SK-N-SH (cell line): ENCODE measurements at regions of chr15 and their contacts with region 1.

Region 1: DNA sequence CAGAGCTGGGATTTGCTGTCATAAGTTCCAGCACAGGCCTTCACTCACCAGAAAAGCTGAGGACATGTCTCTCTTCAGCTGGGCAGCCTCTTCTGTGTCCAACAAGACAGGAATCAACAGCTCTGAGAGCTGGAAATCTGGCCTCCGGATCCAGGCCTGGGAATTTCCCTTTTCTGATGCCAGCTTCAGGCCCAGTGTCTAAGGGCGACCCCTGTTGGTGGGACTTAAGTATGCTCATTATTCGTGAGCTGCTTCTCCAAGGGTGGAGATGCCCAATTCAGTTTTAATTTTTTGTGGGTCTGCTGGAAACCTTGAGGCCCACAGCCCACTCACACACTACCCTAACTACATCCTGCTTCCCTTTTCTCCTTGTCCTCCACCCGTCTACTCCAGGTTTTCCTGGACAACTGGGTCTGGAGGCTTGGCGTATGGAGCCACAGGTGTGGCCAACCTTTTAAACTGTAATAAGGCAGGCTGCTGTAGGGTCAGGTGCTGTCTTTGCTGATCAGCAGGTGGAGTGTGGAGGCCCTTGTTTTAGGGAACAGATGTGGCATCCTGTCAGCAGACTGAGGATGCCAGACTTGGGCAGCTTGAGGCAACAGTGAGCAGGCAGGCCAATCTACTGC is 2.6 kb upstream of the CEMIP start:
- DNase-seq: peak; percentile 76
- H3K4me3 ChIP-seq: peak overlapping the region in 1 of 2 experiments; percentile 13; a peak in 1 of 4 replicates
- H3K27ac ChIP-seq: peak overlapping the region in 1 of 2 experiments; percentile 72; a peak in 2 of 4 replicates
- H3K4me1 ChIP-seq: peaks cover 0 to 27% of the 10 kb centered on the region in 2 experiments; a peak in 3 of 4 replicates
- H3K27me3 ChIP-seq: no peaks in the 10 kb centered on the region
- CTCF ChIP-seq: peak; percentile 88
- EP300 ChIP-seq: no peak
- RAD21 ChIP-seq: peak; percentile 90

Region 2: DNA sequence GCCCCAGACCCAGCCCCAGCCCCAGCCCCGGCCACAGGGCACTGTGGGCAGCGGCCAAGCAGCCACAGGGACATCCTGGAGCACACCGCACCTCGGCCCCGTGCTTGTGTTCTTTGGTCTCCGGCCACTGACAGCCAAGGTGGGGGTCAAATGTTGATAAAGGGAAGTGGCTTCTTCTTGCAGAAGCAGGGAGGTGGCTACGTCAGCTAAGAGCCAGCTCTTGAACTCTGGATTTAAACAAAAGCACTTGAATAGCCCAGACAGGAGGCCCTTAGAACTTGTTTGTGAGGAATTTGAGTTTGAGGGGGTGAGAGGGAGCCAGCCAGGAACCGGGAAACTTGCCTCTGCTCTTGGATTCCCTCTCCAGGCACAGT is 217.2 kb before region 1 on chr15:
- CTCF ChIA-PET with region 1: interaction called, 16 read pairs
- POLR2A ChIA-PET with region 1: no interaction called
- DNase-seq: no peak
- H3K4me3 ChIP-seq: no peak overlapping the region
- H3K27ac ChIP-seq: no peak overlapping the region
- H3K4me1 ChIP-seq: peaks cover 0 to 7% of the 10 kb centered on the region in 2 experiments; a peak in 1 of 4 replicates
- H3K27me3 ChIP-seq: no peaks in the 10 kb centered on the region
- CTCF ChIP-seq: no peak
- EP300 ChIP-seq: no peak
- RAD21 ChIP-seq: no peak

Region 3: DNA sequence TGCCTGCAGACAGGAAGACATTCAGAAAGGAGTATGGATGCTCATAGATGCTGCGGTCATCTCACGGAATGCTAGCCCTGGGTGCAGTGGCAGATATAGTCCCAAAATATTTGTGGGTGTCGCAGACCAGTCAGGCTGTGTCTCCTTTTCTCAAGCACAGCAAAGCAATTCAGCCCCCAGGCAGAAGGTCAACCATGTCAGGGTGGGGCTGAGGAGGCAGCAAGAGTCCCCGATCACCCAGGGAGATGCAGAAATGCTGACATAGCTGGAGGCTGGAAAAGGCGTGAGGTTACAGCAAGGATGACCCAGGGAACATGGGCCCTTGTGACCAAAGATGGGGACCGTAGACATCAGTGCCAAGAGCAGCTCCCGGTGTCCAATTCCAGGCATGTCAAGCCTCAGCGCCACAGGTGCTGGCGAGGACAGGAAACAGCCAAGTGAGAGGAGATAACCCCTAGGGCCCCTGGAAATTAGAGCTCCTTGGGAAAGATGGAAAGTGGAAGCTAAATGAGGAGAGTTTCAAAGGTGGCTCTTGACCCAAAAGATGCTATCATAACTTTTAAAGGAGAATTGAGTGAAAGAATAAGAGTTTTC is 162.7 kb before region 1 on chr15:
- CTCF ChIA-PET with region 1: interaction called, 31 read pairs
- POLR2A ChIA-PET with region 1: no interaction called
- DNase-seq: no peak
- H3K4me3 ChIP-seq: no peak overlapping the region
- H3K27ac ChIP-seq: no peak overlapping the region
- H3K4me1 ChIP-seq: peaks cover 27 to 30% of the 10 kb centered on the region in 2 experiments
- H3K27me3 ChIP-seq: no peaks in the 10 kb centered on the region
- CTCF ChIP-seq: no peak
- EP300 ChIP-seq: no peak
- RAD21 ChIP-seq: no peak

Region 4: DNA sequence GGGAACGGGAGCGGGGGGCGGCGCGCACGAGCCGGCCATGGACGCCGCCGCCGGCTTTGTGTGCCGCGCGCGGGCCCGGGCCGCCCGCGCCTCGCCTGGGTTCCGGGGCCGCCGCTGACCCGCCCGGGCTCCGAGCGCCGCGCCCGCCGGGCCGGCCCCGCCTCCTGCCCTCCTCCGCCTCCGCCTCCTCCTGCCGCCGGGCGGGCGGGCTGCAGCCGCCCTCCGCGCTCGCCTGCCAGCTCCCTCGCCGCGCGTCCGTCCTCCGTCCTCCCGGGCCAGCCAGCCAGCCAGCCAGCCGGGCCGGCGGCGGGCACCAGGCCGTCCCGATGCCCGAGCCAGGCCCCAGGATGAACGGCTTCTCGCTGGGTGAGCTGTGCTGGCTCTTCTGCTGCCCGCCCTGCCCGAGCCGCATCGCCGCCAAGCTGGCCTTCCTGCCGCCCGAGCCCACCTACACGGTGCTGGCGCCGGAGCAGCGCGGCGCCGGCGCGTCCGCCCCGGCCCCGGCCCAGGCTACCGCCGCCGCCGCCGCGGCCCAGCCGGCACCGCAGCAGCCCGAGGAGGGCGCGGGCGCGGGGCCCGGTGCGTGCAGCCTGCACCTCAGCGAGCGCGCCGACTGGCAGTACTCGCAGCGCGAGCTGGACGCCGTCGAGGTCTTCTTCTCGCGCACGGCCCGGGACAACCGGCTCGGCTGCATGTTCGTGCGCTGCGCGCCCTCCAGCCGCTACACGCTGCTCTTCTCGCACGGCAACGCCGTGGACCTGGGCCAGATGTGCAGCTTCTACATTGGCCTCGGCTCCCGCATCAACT is 81.2 kb before region 1 on chr15 and contains the start of gene ABHD17C:
- CTCF ChIA-PET with region 1: interaction called, 49 read pairs
- POLR2A ChIA-PET with region 1: no interaction called
- DNase-seq: peak; percentile 92
- H3K4me3 ChIP-seq: peak within 1 kb of the TSS; percentile 73 to 76
- H3K27ac ChIP-seq: peak within 1 kb of the TSS; percentile 40 to 78
- H3K4me1 ChIP-seq: peaks cover 0 to 15% of the 10 kb centered on the region in 2 experiments; a peak in 2 of 4 replicates
- H3K27me3 ChIP-seq: no peaks in the 10 kb centered on the region
- CTCF ChIP-seq: no peak
- EP300 ChIP-seq: no peak
- RAD21 ChIP-seq: no peak
- polyA plus RNA-seq, gene ABHD17C: 9.2 and 11.7 TPM in 2 replicates

Region 5: GRCh38 chr15:80804965-80805495 is 28.5 kb after region 1 on chr15:
- CTCF ChIA-PET with region 1: interaction called, 11 read pairs
- POLR2A ChIA-PET with region 1: no interaction called
- DNase-seq: no peak
- H3K4me3 ChIP-seq: no peak overlapping the region
- H3K27ac ChIP-seq: no peak overlapping the region
- H3K4me1 ChIP-seq: no peaks in the 10 kb centered on the region; a peak in 1 of 4 replicates
- H3K27me3 ChIP-seq: no peaks in the 10 kb centered on the region
- CTCF ChIP-seq: no peak
- EP300 ChIP-seq: no peak
- RAD21 ChIP-seq: no peak

Region 6: GRCh38 chr15:80841541-80841940 is 65.0 kb after region 1 on chr15:
- CTCF ChIA-PET with region 1: no interaction called
- POLR2A ChIA-PET with region 1: no interaction called
- DNase-seq: no peak
- H3K4me3 ChIP-seq: no peak overlapping the region
- H3K27ac ChIP-seq: no peak overlapping the region
- H3K4me1 ChIP-seq: peaks cover 5 to 7% of the 10 kb centered on the region in 2 experiments; a peak in 1 of 4 replicates
- H3K27me3 ChIP-seq: no peaks in the 10 kb centered on the region
- CTCF ChIP-seq: no peak
- EP300 ChIP-seq: no peak
- RAD21 ChIP-seq: no peak

Region 7: DNA sequence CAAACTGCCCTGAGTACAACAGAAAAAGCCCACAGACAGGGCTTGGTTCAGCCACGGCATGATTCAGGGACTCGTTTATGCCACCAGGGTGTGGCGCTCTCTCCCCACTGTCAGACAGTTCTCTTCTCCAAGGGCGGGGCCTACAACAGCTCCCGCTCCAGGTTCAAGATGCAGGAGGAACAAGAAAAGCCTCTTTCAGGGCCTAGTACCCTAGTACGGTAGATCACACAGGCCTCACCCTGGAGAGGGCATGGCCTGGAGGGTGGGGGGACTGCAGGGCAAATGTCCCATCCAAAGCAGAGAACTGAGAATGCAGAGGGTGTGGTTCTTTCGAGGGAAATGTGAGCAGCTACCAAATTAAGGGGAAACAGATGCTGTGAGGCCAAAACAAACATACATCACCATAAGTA is 201.1 kb after region 1 on chr15:
- CTCF ChIA-PET with region 1: interaction called, 10 read pairs
- POLR2A ChIA-PET with region 1: no interaction called
- DNase-seq: peak; percentile 48
- H3K4me3 ChIP-seq: no peak overlapping the region; a peak in 1 of 4 replicates
- H3K27ac ChIP-seq: no peak overlapping the region
- H3K4me1 ChIP-seq: no peaks in the 10 kb centered on the region; a peak in 2 of 4 replicates
- H3K27me3 ChIP-seq: no peaks in the 10 kb centered on the region
- CTCF ChIP-seq: peak; percentile 52
- EP300 ChIP-seq: no peak
- RAD21 ChIP-seq: peak; percentile 54